ENCODE measurements at regions of chr3 and their contacts with region 1.

Region 1: GRCh38 chr3:71512000-71512399 is 71.5 kb downstream of the FOXP1 start:
- DNase-seq: no peak
- ATAC-seq: peak; percentile 97
- H3K4me3 Mint-ChIP-seq: peak overlapping the region; percentile 5
- H3K27ac Mint-ChIP-seq: no peak overlapping the region
- H3K4me1 Mint-ChIP-seq: peaks cover 22% of the 10 kb centered on the region
- H3K27me3 Mint-ChIP-seq: no peaks in the 10 kb centered on the region
- CTCF ChIP-seq: no peak

Region 2: DNA sequence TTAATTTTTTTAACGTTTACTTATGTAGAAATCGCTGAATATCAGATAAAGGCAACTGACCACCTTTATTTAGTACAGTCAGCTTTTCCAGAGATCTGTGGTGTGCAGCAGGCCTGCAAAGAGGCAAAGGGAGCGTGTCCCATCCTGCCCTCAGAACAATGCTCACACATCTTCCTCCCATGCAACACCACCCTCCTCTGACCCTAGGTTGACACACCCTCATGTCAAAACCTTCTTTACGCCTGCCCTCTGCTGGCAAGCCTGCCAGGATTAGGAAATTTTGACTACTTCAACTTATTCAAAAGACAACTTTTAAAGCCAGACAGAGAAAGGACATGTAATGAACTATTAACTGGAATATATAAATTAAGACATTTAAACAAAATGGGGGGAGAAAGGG is 442.2 kb before region 1 on chr3:
- CTCF ChIA-PET with region 1: interaction called, 5 read pairs
- POLR2A ChIA-PET with region 1: interaction called, 3 read pairs
- intact Hi-C with region 1: loop called (anchors 1 kb)
- DNase-seq: no peak
- ATAC-seq: peak; percentile 44
- H3K4me3 Mint-ChIP-seq: peak overlapping the region; percentile 36
- H3K27ac Mint-ChIP-seq: peak overlapping the region; percentile 79
- H3K4me1 Mint-ChIP-seq: peaks cover 89% of the 10 kb centered on the region
- H3K27me3 Mint-ChIP-seq: no peaks in the 10 kb centered on the region
- CTCF ChIP-seq: no peak

Region 3: DNA sequence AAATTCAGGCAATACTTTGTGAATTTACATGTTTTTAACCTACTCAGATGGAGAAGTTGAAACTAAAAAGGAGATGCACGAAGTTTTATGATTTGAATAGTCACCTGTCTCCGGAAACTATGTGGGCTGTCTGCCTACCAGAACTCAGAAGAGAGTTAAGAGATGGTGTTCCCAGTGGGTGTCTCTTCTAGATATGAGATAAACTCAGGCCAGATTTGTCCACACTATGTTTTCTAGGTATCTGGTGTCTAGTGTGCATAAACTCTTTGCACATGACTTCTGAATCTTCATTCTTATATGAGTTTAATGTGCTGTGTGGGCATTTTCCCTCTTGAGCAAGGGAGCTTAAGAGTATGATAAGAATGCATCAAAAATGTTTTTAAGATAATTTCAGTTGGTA is 151.2 kb before region 1 on chr3:
- CTCF ChIA-PET with region 1: interaction called, 3 read pairs
- POLR2A ChIA-PET with region 1: interaction called, 4 read pairs
- intact Hi-C with region 1: loop called (anchors 5 kb)
- DNase-seq: no peak
- ATAC-seq: peak; percentile 62
- H3K4me3 Mint-ChIP-seq: peak overlapping the region; percentile 81
- H3K27ac Mint-ChIP-seq: peak overlapping the region; percentile 93
- H3K4me1 Mint-ChIP-seq: peaks cover 88% of the 10 kb centered on the region
- H3K27me3 Mint-ChIP-seq: no peaks in the 10 kb centered on the region
- CTCF ChIP-seq: no peak

Region 4: DNA sequence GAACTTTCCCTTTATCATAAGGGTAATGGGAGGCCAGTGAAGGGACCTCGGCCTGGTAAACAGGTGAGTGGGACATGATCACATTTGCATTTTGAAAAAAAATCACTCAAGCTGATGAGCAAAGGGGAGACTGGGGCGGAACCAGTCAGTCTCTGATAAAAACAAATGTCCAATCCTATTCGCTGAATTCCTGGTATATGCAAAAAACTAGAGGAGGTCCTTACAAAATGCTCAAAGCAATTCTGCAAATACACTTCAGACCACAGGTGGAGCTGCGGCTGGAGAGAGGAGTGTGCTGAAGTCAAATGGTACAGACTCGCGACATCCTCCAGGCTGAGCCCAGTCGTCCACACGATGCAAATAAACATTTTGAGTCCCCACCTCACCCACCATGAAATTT is 95.1 kb before region 1 on chr3:
- CTCF ChIA-PET with region 1: interaction called, 3 read pairs
- POLR2A ChIA-PET with region 1: interaction called, 7 read pairs
- intact Hi-C with region 1: loop called (anchors 5 kb)
- DNase-seq: no peak
- ATAC-seq: peak; percentile 54
- H3K4me3 Mint-ChIP-seq: peak overlapping the region; percentile 42
- H3K27ac Mint-ChIP-seq: peak overlapping the region; percentile 81
- H3K4me1 Mint-ChIP-seq: peaks cover 82% of the 10 kb centered on the region
- H3K27me3 Mint-ChIP-seq: no peaks in the 10 kb centered on the region
- CTCF ChIP-seq: no peak